ENCODE measurements at regions of chr11 and their contacts with region 1.

Region 1: DNA sequence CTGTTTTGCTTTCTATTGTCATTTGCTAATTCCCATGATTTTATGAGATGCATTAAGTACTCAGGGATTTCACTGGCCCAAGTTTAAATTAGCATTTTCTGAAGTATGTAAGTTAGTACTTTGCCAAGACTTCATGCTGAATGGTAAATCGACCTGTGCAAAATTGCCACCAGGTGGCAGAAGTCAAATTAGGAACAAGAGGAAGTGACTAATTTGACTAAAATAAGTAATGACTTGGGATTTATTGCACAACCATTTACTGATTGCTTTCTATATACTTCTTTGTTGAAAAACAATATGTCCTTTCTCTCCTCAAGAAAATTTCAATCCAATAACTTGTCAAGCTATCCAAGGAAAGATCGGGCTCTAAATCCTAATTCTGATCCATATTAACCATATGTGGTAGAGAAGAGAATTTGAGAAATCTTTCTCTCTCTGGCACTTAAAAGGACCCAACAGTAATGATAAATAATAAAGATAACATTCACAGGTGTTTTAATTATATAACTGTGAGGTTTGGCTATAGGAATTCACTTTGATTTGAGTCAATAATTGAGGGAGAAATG is 253.7 kb upstream of the CHORDC1 start:
- DNase-seq: peak in 1 of 2 donors; percentile 16
- ATAC-seq: no peak
- H3K4me3 ChIP-seq: no peak overlapping the region
- H3K27ac ChIP-seq: no peak overlapping the region
- H3K4me1 ChIP-seq: no peaks in the 10 kb centered on the region
- H3K27me3 ChIP-seq: no peaks in the 10 kb centered on the region
- CTCF ChIP-seq: peak in 7 of 9 donors; percentile 40 to 62 (median 51)

Region 2: GRCh38 chr11:90423378-90423777 is 53.1 kb before region 1 on chr11:
- intact Hi-C with region 1: loop called in 1 of 10 experiments (anchors 10 kb)
- DNase-seq: no peak
- ATAC-seq: no peak
- H3K4me3 ChIP-seq: no peak overlapping the region
- H3K27ac ChIP-seq: no peak overlapping the region
- H3K4me1 ChIP-seq: no peaks in the 10 kb centered on the region
- H3K27me3 ChIP-seq: no peaks in the 10 kb centered on the region
- CTCF ChIP-seq: no peak

Region 3: DNA sequence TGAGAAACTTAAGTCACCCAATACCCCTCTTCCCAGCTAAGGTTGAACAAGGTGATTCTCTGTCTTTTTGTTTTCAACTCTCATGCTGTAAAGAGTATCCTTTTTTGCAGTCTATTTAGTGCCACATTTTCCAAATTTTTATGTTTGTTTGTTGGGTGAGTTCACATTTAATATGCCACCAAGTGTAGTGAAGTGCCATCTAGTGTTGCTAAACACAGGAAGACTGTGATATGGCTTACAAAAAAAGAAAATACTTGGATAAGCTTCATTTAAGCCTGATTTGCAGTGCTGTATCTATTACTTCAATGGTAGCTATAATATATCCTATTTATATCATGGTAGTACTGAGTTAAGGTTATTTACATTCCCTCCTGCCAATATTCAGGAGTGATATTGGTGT is 65.6 kb after region 1 on chr11:
- intact Hi-C with region 1: loop called in 2 of 10 experiments (anchors 10 kb)
- DNase-seq: no peak
- ATAC-seq: no peak
- H3K4me3 ChIP-seq: no peak overlapping the region
- H3K27ac ChIP-seq: no peak overlapping the region
- H3K4me1 ChIP-seq: no peaks in the 10 kb centered on the region
- H3K27me3 ChIP-seq: no peaks in the 10 kb centered on the region
- CTCF ChIP-seq: peak in 4 of 9 donors; percentile 13 to 50 (median 43)

Region 4: DNA sequence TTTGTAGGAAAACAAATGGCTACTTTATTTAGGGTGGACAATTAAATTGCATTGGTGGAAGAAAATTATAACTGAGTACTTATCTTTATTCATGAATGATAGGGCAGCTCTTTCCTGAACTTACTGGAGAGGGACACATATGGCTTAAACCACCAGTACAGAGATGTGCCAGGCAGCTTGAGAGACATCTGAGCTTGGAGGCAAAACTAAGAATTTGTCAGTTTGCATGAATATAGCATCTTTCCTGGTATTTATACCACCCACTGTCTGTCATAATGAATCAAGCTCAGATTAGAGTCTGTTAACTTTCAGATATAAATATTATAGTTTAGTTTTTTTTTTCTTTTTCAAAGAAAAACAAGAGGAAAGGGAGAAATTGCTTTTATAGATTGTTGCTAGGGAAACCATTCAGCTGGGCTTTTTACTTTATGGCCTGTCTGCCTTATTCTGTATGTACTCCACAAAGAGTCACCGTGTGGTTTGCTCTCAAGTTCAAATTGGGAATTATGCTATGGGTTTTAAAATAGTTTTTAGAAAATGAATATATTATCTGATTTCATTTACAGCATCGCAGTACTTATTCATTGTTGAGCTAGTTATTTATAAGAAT is 223.4 kb after region 1 on chr11:
- intact Hi-C with region 1: no loop called
- DNase-seq: no peak
- ATAC-seq: no peak
- H3K4me3 ChIP-seq: no peak overlapping the region
- H3K27ac ChIP-seq: no peak overlapping the region
- H3K4me1 ChIP-seq: no peaks in the 10 kb centered on the region
- H3K27me3 ChIP-seq: no peaks in the 10 kb centered on the region
- CTCF ChIP-seq: no peak